Activated CD4-positive, alpha-beta memory T cell treated with anti-CD3 and anti-CD28 coated beads, Interleukin-2, amount 10 ng/mL, durations not matched to agents 7 days and 5 days (primary cell): ENCODE measurements at regions of chr3 and their contacts with region 1.

Region 1: DNA sequence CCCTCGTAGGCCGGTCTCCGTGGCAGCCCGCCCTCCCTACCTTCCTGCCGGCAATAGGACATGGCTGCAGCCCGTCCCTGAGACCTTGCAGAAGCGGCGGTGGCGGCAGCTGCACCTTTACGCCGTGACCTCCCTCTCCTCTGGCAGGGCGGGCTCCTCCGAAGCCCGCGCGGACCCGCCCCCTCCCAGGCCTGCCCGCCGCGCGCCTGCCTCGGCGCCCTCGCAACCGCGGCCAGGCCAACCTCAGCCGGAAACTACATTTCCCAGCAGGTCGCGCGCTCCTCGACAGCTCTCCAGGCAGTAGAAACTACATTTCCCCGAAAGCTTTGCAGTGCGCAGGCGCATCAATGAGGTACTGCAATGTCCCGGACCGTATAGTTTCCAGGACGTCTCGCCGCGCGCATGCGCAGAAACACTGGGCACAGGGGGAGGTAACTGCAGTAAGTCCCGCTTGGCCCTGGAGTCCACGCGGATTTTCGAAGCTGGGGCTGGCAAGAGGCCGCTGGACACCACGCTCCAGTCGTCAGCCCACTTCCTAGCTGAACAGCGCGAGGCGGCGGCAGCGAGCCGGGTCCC is at the starts of genes CHCHD4 and TMEM43:
- DNase-seq: peak; percentile 99
- H3K4me3 Mint-ChIP-seq: peak within 1 kb of the TSS; percentile 92
- H3K27ac Mint-ChIP-seq: peak within 1 kb of the TSS; percentile 90
- H3K4me1 Mint-ChIP-seq: peaks cover 61% of the 10 kb centered on the region
- H3K27me3 Mint-ChIP-seq: no peaks in the 10 kb centered on the region
- total RNA-seq, gene CHCHD4: 11.5 to 12.8 TPM
- total RNA-seq, gene TMEM43: 43.6 to 46.0 TPM

Region 2: GRCh38 chr3:13927295-13927694 is 197.4 kb before region 1 on chr3:
- CTCF ChIA-PET with region 1: no interaction called
- POLR2A ChIA-PET with region 1: no interaction called
- DNase-seq: no peak
- H3K4me3 Mint-ChIP-seq: no peak overlapping the region
- H3K27ac Mint-ChIP-seq: no peak overlapping the region
- H3K4me1 Mint-ChIP-seq: no peaks in the 10 kb centered on the region
- H3K27me3 Mint-ChIP-seq: peaks cover 4% of the 10 kb centered on the region

Region 3: DNA sequence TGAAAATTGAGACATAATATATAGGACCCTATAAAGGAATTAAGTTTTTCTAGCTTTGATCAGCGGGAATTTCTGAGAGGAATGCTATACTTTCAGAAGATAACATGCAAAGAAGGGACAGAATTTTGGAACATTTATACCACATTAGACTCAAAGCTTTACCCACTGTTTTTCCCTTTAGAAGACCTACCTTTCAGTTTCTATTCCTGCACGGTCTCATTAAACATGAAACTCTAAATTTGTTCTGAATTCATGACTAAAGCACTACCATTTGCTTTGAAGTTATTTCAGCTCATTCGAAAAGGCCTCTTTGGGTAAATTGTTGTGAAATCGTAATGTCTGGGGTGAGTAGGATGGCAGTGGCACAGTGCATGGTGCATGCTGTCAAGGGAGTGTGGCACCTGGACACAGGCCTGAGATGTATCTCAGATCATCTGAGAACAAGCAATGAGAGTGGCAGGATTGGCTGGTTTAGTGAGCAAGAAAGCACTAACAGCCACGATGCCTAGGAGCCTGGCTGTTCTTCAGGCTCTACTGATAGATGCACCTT is 42.5 kb before region 1 on chr3:
- CTCF ChIA-PET with region 1: no interaction called
- POLR2A ChIA-PET with region 1: no interaction called
- DNase-seq: no peak
- H3K4me3 Mint-ChIP-seq: no peak overlapping the region
- H3K27ac Mint-ChIP-seq: peak overlapping the region; percentile 56
- H3K4me1 Mint-ChIP-seq: peaks cover 7% of the 10 kb centered on the region
- H3K27me3 Mint-ChIP-seq: no peaks in the 10 kb centered on the region

Region 4: GRCh38 chr3:14144423-14145075 is 19.8 kb after region 1 on chr3:
- CTCF ChIA-PET with region 1: interaction called, 11 read pairs
- POLR2A ChIA-PET with region 1: interaction called, 133 read pairs
- DNase-seq: peak; percentile 74
- H3K4me3 Mint-ChIP-seq: peak overlapping the region; percentile 57
- H3K27ac Mint-ChIP-seq: peak overlapping the region; percentile 92
- H3K4me1 Mint-ChIP-seq: peaks cover 41% of the 10 kb centered on the region
- H3K27me3 Mint-ChIP-seq: no peaks in the 10 kb centered on the region

Region 5: DNA sequence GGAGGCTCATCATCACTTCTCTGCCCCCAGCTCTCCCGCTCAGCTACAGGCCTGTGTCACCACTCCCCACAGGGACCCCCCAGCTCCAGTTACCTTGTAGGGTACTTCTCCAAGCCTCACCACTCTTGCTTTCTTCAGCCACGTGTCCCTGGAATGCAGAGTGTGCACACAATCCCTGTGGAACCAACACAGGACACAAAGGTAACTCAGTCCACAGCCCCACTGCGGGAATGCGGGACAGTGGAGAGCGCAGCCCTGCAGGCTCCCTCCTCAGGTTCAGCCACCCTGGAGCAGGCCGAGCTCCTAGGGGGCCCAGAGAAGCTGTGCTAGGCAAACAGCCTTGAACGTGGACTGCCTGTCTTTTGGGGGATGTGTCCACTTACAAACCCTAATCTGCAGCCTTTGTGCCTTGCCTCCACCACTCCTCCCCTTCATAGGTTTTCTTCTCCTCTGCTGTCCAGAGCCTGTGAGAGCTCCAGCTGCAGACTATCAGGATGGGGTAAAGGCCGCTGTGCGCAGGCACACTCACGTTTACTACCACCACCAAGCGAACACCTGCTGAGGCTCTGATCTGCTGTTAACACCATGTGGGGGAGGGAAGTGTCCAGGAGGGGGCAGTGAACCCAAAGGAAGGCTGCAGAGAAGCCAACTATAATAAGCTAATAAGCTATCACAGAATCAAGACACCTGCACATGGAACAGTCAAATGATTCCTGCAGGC is 27.7 kb after region 1 on chr3:
- CTCF ChIA-PET with region 1: interaction called, 10 read pairs
- POLR2A ChIA-PET with region 1: interaction called, 133 read pairs
- DNase-seq: no peak
- H3K4me3 Mint-ChIP-seq: no peak overlapping the region
- H3K27ac Mint-ChIP-seq: no peak overlapping the region
- H3K4me1 Mint-ChIP-seq: no peaks in the 10 kb centered on the region
- H3K27me3 Mint-ChIP-seq: no peaks in the 10 kb centered on the region

Region 6: GRCh38 chr3:14194865-14195264 is 70.2 kb after region 1 on chr3:
- CTCF ChIA-PET with region 1: no interaction called
- POLR2A ChIA-PET with region 1: no interaction called
- DNase-seq: no peak
- H3K4me3 Mint-ChIP-seq: no peak overlapping the region
- H3K27ac Mint-ChIP-seq: no peak overlapping the region
- H3K4me1 Mint-ChIP-seq: peaks cover 12% of the 10 kb centered on the region
- H3K27me3 Mint-ChIP-seq: no peaks in the 10 kb centered on the region

Region 7: DNA sequence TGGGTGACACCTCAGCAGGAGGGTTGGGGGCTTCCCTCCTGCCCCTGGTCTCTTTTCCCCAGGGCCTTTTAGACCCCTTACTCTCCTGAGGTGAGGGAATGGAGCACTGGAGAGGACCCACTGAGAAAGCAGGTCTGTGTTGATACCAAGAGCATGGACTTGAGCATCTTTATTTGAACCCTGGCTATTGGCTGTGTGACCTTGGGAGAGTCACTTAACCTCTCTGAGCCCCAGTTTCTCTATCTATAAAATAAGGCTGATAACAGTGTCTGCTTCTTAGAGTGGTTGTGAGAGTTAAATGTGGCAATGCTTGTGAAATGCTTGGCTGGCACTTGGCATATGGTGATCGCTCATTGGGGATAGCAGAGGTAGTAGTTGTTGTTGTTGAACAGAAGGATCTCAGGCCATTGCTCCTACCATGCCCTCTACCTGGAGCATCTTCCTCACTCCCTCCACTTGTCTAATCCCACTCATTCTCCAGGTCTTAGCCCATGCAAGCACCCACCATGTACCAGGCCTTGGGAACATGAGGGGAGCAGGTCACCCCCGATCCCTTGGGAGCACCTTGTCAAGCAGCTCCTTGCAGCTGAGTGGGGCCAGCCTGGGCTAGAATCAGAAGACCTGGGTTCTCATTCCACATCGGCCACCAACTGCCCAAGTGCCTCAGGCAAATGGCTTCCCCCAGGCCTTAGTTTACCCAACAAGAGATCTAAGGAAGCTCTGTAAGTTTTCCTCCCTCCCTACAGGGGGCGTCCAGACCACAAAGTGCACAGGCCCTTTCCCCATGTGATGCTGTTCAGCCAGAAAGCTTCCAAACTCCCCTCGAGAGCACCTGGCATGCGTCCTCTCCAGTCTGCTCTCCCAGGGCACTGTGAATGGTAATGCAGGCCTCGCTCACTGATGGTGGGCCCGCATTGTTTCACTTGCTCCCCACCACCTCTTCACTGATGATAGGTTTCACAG is 150.6 kb after region 1 on chr3:
- CTCF ChIA-PET with region 1: no interaction called
- POLR2A ChIA-PET with region 1: no interaction called
- DNase-seq: peak; percentile 20
- H3K4me3 Mint-ChIP-seq: no peak overlapping the region
- H3K27ac Mint-ChIP-seq: no peak overlapping the region
- H3K4me1 Mint-ChIP-seq: no peaks in the 10 kb centered on the region
- H3K27me3 Mint-ChIP-seq: peaks cover 5% of the 10 kb centered on the region